T-cell (primary cell): ENCODE measurements at regions of chr16 and their contacts with region 1.

Region 1: DNA sequence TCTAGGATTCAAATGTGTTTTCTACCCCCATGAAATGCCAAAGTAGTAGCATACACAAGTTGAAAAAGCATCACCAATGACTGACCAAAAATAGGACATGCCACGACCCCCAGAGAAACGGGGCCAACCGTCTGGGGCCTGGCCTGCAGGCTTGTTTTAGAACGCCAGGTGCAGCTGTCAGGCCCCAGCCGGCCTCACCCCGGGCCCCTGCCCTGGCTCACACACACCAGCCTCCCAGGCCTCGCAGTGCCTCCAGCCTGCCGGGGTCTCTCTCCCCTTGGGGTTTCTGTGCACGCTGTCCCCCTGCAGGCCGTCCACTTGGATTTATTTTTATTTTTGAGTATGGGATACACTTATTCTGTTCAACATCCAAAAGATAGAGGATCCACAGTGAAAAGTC is 7.9 kb downstream of the KATNB1 start:
- DNase-seq: no peak
- ATAC-seq: no peak
- H3K4me3 ChIP-seq: no peak overlapping the region
- H3K4me3 Mint-ChIP-seq: no peak overlapping the region
- H3K27ac ChIP-seq: no peak overlapping the region
- H3K27ac Mint-ChIP-seq: no peak overlapping the region
- H3K4me1 ChIP-seq: no peaks in the 10 kb centered on the region
- H3K4me1 Mint-ChIP-seq: no peaks in the 10 kb centered on the region
- H3K27me3 ChIP-seq: no peaks in the 10 kb centered on the region
- H3K27me3 Mint-ChIP-seq: no peaks in the 10 kb centered on the region

Region 2: DNA sequence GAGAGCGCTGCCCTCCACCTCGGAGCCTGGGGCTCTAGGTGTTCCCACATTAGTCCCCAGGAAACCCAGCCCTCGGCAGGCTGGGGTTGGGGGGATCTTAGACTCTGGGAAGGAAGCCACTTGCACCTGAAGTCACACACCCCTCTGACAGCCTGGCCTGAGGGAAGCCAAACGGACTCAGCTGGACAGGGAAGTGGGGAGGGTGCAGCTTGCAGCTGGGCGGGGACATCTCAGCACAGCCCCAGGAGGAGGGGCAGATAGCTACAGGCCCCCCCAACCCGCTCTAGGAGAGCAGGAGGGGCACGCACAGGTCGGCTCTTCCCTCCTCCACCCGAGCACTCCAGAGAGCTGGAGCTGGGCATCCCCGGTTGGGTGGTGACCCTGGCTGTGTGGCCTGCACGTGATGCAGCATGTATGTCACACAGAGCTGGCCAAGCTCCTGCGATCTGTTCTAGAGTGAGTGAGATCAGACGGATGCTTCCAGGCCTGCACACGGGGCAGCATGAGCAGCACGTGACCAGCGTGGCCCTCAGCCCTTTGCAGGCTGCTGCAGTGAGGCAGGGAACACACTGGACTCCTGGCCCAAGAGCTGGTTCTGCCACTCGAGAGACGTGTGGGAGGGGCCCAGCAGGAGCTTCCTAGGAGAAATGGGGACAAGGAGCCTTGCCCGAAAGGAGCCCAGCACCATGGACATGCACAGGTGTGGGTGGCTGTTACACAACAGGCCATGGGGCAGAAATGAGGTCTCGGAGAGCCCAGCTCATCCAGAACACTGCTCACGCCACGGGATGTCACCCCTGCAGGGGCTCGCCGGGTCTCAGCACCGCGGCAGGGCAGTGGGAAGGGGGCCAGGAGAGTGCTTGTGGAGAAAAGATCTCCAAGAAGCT is 43.4 kb after region 1 on chr16:
- CTCF ChIA-PET with region 1: no interaction called
- POLR2A ChIA-PET with region 1: no interaction called
- DNase-seq: no peak
- ATAC-seq: no peak
- H3K4me3 ChIP-seq: no peak overlapping the region
- H3K4me3 Mint-ChIP-seq: no peak overlapping the region
- H3K27ac ChIP-seq: no peak overlapping the region
- H3K27ac Mint-ChIP-seq: no peak overlapping the region
- H3K4me1 ChIP-seq: no peaks in the 10 kb centered on the region
- H3K4me1 Mint-ChIP-seq: no peaks in the 10 kb centered on the region
- H3K27me3 ChIP-seq: peaks cover 0 to 13% of the 10 kb centered on the region in 2 experiments
- H3K27me3 Mint-ChIP-seq: no peaks in the 10 kb centered on the region

Region 3: DNA sequence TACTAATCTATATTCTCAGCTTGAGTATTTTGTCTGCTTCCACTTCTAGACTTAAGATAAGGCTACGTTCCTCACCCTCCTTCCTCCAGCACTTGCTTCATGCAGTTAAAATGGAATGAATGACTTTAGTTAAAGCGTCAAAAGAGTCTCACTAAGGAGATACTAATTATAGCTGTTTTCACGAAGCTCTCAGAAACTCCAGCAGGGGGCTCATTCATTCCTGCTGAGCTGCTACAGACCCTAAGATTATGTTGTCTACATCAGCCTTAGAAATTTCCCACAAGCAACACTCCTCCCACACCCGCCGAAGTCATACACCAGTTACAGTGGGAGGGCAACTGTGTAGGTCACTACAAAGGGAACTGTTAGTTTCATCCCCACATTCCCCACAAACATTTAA is 115.9 kb after region 1 on chr16:
- CTCF ChIA-PET with region 1: no interaction called
- POLR2A ChIA-PET with region 1: interaction called in 1 of 2 experiments, 10 read pairs
- DNase-seq: peak in 1 of 35 experiments; percentile 14
- ATAC-seq: no peak
- H3K4me3 ChIP-seq: no peak overlapping the region
- H3K4me3 Mint-ChIP-seq: no peak overlapping the region
- H3K27ac ChIP-seq: no peak overlapping the region
- H3K27ac Mint-ChIP-seq: no peak overlapping the region
- H3K4me1 ChIP-seq: no peaks in the 10 kb centered on the region
- H3K4me1 Mint-ChIP-seq: peaks cover 0 to 2% (median 2%) of the 10 kb centered on the region in 3 donors
- H3K27me3 ChIP-seq: peaks cover 0 to 15% of the 10 kb centered on the region in 2 experiments
- H3K27me3 Mint-ChIP-seq: peaks cover 11 to 30% of the 10 kb centered on the region in 2 donors

Region 4: GRCh38 chr16:57899771-57900661 is 156.6 kb after region 1 on chr16:
- CTCF ChIA-PET with region 1: no interaction called
- POLR2A ChIA-PET with region 1: no interaction called
- DNase-seq: peak; percentile 45 to 88 (median 71)
- ATAC-seq: peak; percentile 73 to 82 (median 77)
- H3K4me3 ChIP-seq: no peak overlapping the region
- H3K4me3 Mint-ChIP-seq: no peak overlapping the region
- H3K27ac ChIP-seq: no peak overlapping the region
- H3K27ac Mint-ChIP-seq: no peak overlapping the region
- H3K4me1 ChIP-seq: peaks cover 0 to 5% of the 10 kb centered on the region in 2 experiments
- H3K4me1 Mint-ChIP-seq: peaks cover 0 to 4% (median 1%) of the 10 kb centered on the region in 3 donors
- H3K27me3 ChIP-seq: peaks cover 0 to 31% of the 10 kb centered on the region in 2 experiments
- H3K27me3 Mint-ChIP-seq: peaks cover 13 to 21% of the 10 kb centered on the region in 2 donors

Region 5: DNA sequence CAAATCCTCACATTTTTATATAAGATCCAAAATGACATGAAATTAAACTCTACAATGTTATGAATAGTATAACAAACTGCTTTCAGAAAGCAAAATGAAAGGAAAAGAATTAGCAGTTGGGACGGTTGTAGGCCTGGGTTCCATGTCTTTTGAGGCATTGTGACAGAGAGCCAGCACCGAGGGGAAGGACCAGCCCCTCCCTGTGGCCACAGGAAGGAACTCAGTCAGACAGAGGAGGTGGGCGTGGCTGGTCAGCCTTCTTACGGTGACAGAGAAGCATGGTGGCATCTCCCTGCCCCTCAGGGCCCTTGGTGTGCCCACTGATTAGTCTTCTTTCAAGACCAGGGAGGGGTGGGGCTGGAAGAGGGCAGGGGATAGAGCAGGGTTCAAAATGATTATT is 251.3 kb after region 1 on chr16:
- CTCF ChIA-PET with region 1: no interaction called
- POLR2A ChIA-PET with region 1: no interaction called
- DNase-seq: peak in 29 of 35 experiments; percentile 19 to 61 (median 38)
- ATAC-seq: no peak
- H3K4me3 ChIP-seq: no peak overlapping the region
- H3K4me3 Mint-ChIP-seq: peak overlapping the region in 1 of 3 donors; percentile 6
- H3K27ac ChIP-seq: peak overlapping the region; percentile 46
- H3K27ac Mint-ChIP-seq: peak overlapping the region; percentile 89 to 90
- H3K4me1 ChIP-seq: peaks cover 21 to 67% of the 10 kb centered on the region in 2 experiments
- H3K4me1 Mint-ChIP-seq: peaks cover 48 to 66% (median 53%) of the 10 kb centered on the region in 3 donors
- H3K27me3 ChIP-seq: no peaks in the 10 kb centered on the region
- H3K27me3 Mint-ChIP-seq: no peaks in the 10 kb centered on the region